MCF 10A (cell line): ENCODE measurements at regions of chr5 and their contacts with region 1.

Region 1: GRCh38 chr5:139204196-139204595 is 6.0 kb upstream of the SIL1 start:
- DNase-seq: no peak
- H3K4me3 Mint-ChIP-seq: no peak overlapping the region
- H3K27ac Mint-ChIP-seq: no peak overlapping the region
- H3K4me1 Mint-ChIP-seq: no peaks in the 10 kb centered on the region
- H3K27me3 Mint-ChIP-seq: no peaks in the 10 kb centered on the region
- CTCF ChIP-seq: no peak

Region 2: DNA sequence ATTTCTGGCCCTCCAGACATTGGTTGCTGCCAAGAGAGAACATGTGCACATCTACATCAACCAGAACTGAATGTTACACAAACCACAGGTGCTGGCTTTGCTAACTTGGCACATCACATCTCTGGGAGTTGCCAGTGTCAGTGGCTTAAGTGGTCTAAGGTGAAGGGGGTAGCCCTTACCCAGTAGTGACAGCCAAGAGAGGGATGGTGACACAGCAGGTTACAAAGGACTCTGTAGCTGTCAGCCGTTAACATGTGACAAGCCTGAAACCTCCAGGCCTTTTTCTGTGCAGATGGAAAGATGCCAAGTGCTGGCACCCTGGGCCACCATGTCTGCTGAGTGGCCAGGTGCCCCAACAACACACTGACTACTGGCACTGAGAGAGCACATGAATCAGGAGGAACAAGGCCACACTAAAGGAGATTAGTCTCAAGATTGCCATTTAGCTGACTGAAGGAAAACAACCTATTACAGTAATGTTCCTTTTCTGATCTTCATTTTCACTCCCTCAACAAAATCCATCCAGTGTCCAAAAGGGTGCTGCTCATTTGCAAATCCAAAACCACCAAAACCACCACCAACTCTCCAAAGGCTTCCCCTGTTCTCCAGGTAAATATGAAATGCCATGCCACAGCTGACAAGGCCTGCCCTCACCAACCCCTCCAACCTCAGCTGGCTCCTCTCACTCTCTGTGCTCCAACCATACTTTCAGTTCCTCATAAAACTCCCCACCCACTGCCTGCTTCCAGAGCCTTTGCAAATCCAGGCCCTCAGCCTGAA is 26.2 kb before region 1 on chr5:
- CTCF ChIA-PET with region 1: no interaction called
- POLR2A ChIA-PET with region 1: interaction called, 11 read pairs
- intact Hi-C with region 1: no loop called
- DNase-seq: peak; percentile 33
- H3K4me3 Mint-ChIP-seq: no peak overlapping the region
- H3K27ac Mint-ChIP-seq: peak overlapping the region; percentile 63
- H3K4me1 Mint-ChIP-seq: peaks cover 49% of the 10 kb centered on the region
- H3K27me3 Mint-ChIP-seq: no peaks in the 10 kb centered on the region
- CTCF ChIP-seq: no peak

Region 3: DNA sequence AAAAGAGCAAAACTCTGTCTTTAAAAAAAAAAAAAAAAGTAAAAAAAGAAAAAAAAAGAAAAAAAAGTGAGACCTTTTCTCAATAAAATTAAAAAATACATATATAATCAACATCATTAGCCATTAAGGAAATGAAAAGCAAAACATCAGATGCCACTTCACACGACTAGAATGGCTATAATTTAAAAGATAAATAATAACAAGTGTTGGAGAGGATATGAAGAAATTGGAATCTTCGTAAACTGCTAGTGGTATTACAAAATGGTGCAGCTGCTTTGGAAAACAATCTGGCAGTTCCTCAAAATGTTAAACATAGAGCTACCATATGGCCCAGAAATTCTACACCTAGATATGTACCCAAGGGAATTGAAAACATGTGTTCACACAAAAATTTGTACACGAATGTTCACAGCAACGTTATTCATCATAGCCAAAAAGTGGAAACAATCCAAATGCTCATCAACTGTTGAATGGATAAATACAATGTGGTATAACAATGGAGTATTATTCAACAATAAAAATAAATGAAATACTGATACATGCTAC is 39.3 kb after region 1 on chr5:
- CTCF ChIA-PET with region 1: no interaction called
- POLR2A ChIA-PET with region 1: no interaction called
- intact Hi-C with region 1: no loop called
- DNase-seq: no peak
- H3K4me3 Mint-ChIP-seq: no peak overlapping the region
- H3K27ac Mint-ChIP-seq: no peak overlapping the region
- H3K4me1 Mint-ChIP-seq: peaks cover 14% of the 10 kb centered on the region
- H3K27me3 Mint-ChIP-seq: peaks cover 15% of the 10 kb centered on the region
- CTCF ChIP-seq: no peak